ENCODE measurements at regions of chr11 and their contacts with region 1.

Region 1: GRCh38 chr11:110296226-110297075 is at the start of gene RDX:
- DNase-seq: no peak
- ATAC-seq: peak; percentile 94
- H3K4me3 ChIP-seq: peak within 1 kb of the TSS; percentile 79 to 86
- H3K27ac ChIP-seq: peak within 1 kb of the TSS; percentile 98
- H3K4me1 ChIP-seq: peaks cover 35% of the 10 kb centered on the region
- H3K27me3 ChIP-seq: no peaks in the 10 kb centered on the region
- CTCF ChIP-seq: no peak; the same call in 1 of the 2 replicates
- total RNA-seq, gene RDX: 200 TPM

Region 2: GRCh38 chr11:110362971-110363509 is 66.6 kb after region 1 on chr11:
- CTCF ChIA-PET with region 1: no interaction called
- POLR2A ChIA-PET with region 1: no interaction called
- in situ Hi-C with region 1: no loop called
- intact Hi-C with region 1: loop called (anchors 2 kb)
- DNase-seq: no peak
- ATAC-seq: peak; percentile 95
- H3K4me3 ChIP-seq: peak overlapping the region in 1 of 2 experiments; percentile 45; a peak in 2 of 4 replicates
- H3K27ac ChIP-seq: peak overlapping the region; percentile 90
- H3K4me1 ChIP-seq: peaks cover 21% of the 10 kb centered on the region
- H3K27me3 ChIP-seq: no peaks in the 10 kb centered on the region
- CTCF ChIP-seq: no peak

Region 3: GRCh38 chr11:110429731-110430266 is 133.3 kb after region 1 on chr11 and contains the start of gene FDX1:
- CTCF ChIA-PET with region 1: no interaction called
- POLR2A ChIA-PET with region 1: no interaction called
- in situ Hi-C with region 1: no loop called
- intact Hi-C with region 1: loop called (anchors 5 kb)
- DNase-seq: no peak
- ATAC-seq: peak; percentile 94
- H3K4me3 ChIP-seq: peak within 1 kb of the TSS; percentile 80 to 87
- H3K27ac ChIP-seq: peak within 1 kb of the TSS; percentile 88
- H3K4me1 ChIP-seq: peaks cover 32% of the 10 kb centered on the region
- H3K27me3 ChIP-seq: no peaks in the 10 kb centered on the region
- CTCF ChIP-seq: peak; percentile 96
- total RNA-seq, gene FDX1: 13.6 TPM

Measured in Panc1 (cell line).